Activated B cell treated with CpG ODN at 0.5 μM for 24 hours (primary cell): ENCODE measurements at regions of chr12 and their contacts with region 1.

Region 1: GRCh38 chr12:113174461-113175384 is 10.6 kb downstream of the DDX54 start:
- DNase-seq: peak; percentile 78
- ATAC-seq: peak; percentile 81
- H3K4me3 Mint-ChIP-seq: no peak overlapping the region
- H3K27ac Mint-ChIP-seq: no peak overlapping the region
- H3K4me1 Mint-ChIP-seq: peaks cover 32% of the 10 kb centered on the region
- H3K27me3 Mint-ChIP-seq: no peaks in the 10 kb centered on the region
- CTCF ChIP-seq: peak; percentile 95

Region 2: GRCh38 chr12:112750971-112751370 is 423.8 kb before region 1 on chr12:
- CTCF ChIA-PET with region 1: no interaction called
- POLR2A ChIA-PET with region 1: no interaction called
- intact Hi-C with region 1: no loop called
- DNase-seq: no peak
- ATAC-seq: no peak
- H3K4me3 Mint-ChIP-seq: no peak overlapping the region
- H3K27ac Mint-ChIP-seq: no peak overlapping the region
- H3K4me1 Mint-ChIP-seq: no peaks in the 10 kb centered on the region
- H3K27me3 Mint-ChIP-seq: peaks cover 15% of the 10 kb centered on the region
- CTCF ChIP-seq: no peak

Region 3: GRCh38 chr12:112900299-112901145 is 274.2 kb before region 1 on chr12:
- CTCF ChIA-PET with region 1: interaction called, 7 read pairs
- POLR2A ChIA-PET with region 1: interaction called, 4 read pairs
- intact Hi-C with region 1: loop called (anchors 2 kb)
- DNase-seq: no peak
- ATAC-seq: peak; percentile 45
- H3K4me3 Mint-ChIP-seq: no peak overlapping the region
- H3K27ac Mint-ChIP-seq: no peak overlapping the region
- H3K4me1 Mint-ChIP-seq: peaks cover 42% of the 10 kb centered on the region
- H3K27me3 Mint-ChIP-seq: peaks cover 2% of the 10 kb centered on the region
- CTCF ChIP-seq: peak; percentile 73

Region 4: DNA sequence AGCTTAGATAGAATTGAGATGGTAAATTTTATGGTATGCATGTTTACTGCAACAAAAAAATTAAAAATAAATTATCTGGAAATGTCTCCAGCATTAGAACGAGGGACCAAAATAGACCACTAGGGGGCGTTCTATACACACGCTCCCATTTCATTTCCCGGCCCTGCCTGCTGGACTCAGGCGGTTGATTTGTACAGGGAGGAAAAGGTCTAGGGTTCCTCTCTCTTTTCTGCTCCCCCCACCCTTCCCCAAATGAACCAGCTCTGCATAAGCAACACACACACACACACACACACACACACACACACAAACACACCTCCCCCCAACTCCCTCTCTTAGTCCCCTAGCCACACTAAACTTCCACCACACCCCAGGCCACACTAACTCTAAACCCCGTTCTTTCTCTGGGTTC is 126.0 kb before region 1 on chr12:
- CTCF ChIA-PET with region 1: interaction called, 26 read pairs
- POLR2A ChIA-PET with region 1: interaction called, 8 read pairs
- intact Hi-C with region 1: loop called (anchors 1 kb)
- DNase-seq: no peak
- ATAC-seq: peak; percentile 43
- H3K4me3 Mint-ChIP-seq: no peak overlapping the region
- H3K27ac Mint-ChIP-seq: peak overlapping the region; percentile 75
- H3K4me1 Mint-ChIP-seq: peaks cover 50% of the 10 kb centered on the region
- H3K27me3 Mint-ChIP-seq: no peaks in the 10 kb centered on the region
- CTCF ChIP-seq: no peak

Region 5: DNA sequence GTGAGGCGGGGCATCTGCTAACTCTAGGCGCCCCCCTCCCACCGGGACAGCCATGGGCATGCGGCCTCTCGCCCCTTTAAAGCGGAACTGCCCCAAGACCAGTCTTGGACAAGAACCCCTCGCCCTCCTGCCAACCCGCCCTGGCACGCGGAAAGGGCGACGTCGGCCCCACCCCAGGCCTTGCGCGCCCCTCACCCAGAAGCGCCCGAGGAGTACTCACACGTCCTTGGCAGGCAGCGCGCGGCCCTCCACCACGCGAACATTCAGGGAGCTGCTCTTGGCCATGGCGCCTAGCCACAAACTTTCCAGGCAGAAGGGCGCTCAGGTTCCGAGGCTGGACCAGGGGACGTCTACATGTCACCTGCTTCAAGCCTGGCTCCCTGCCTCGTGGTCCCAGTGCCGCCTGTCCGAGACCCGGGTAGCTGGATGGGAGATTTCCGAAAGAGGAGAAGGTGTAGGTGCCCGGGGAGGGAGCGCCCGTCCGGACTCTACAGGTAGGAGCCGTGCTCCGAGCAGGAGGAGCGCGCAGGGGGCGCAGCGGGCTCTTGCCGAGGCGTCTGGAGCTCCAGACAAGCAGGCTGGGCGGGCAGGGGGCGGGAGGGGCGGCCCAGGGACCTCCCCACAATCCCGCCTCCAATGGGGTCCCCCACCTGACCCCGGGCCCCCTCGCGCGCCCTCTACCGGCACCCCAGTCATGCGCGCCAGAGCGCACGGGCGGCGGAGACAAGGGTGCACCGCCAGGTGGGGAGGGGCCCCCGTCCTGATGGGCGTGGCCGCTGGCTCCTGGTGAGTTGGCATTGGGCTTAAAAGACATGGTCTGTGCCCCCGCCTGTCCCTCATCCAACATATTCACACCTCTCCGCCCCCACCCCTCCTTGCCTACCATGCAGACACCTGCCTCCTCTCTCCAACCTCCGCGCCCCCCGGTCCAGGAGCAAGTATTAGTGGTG is 39.3 kb before region 1 on chr12 and contains the start of gene RASAL1:
- CTCF ChIA-PET with region 1: interaction called, 3 read pairs
- POLR2A ChIA-PET with region 1: interaction called, 5 read pairs
- intact Hi-C with region 1: loop called (anchors 1 kb)
- DNase-seq: peak; percentile 64
- ATAC-seq: peak; percentile 84
- H3K4me3 Mint-ChIP-seq: peak within 1 kb of the TSS; percentile 77
- H3K27ac Mint-ChIP-seq: peak within 1 kb of the TSS; percentile 80
- H3K4me1 Mint-ChIP-seq: peaks cover 30% of the 10 kb centered on the region
- H3K27me3 Mint-ChIP-seq: peaks cover 11% of the 10 kb centered on the region
- CTCF ChIP-seq: no peak
- total RNA-seq, gene RASAL1: 4.9 and 7.1 TPM in 2 replicates

Region 6: DNA sequence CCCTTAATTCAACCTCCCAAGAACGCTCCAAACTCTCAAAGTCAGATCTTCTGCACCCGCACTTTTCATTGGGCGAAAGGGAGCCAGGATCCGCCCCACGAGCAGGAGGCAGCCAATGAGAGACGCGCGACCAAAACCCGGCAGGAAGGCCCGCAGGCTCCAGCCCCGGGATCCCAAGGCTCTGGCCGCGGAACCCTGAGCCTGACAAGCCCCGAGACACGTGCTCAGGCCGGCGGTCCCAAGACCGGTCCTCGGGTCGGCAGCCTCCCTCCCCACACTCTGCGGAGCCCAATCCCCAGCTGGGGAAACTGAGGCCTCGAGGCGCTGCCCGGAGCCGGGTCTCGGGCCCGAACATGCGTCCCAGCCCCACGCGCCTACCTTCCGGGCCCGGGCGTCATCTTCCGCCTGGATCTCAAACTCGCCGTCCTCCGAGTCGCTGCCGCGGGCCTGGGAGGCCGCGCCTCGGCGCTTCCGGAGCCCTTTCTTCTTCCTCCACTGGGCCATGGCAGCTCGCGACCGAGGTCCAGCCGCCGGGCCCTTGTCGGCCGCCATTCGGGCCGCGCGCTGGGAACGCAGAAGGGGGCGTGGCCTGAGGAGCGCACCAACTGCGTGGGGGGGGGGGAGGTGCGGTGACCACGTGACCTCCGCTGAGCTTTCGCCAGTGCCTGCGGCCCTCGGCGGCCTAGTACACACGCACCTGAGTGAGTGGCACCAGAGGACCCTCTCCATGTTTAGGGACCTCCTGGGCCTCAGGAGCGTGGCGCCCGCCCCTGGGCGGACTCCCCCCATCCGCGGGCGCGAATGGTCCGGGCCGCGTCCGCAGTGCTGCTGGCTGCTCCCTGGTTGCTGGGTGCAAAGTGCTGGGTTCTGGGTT is 10.4 kb after region 1 on chr12 and contains the starts of genes DDX54 and RITA1:
- CTCF ChIA-PET with region 1: interaction called, 8 read pairs
- POLR2A ChIA-PET with region 1: interaction called, 15 read pairs
- intact Hi-C with region 1: no loop called
- DNase-seq: peak; percentile 87
- ATAC-seq: peak; percentile 83
- H3K4me3 Mint-ChIP-seq: peak within 1 kb of the TSS; percentile 93
- H3K27ac Mint-ChIP-seq: peak within 1 kb of the TSS; percentile 94
- H3K4me1 Mint-ChIP-seq: peaks cover 39% of the 10 kb centered on the region
- H3K27me3 Mint-ChIP-seq: no peaks in the 10 kb centered on the region
- CTCF ChIP-seq: no peak
- total RNA-seq, gene DDX54: 115 TPM in 2 replicates
- total RNA-seq, gene RITA1: 15.5 and 18.2 TPM in 2 replicates

Region 7: DNA sequence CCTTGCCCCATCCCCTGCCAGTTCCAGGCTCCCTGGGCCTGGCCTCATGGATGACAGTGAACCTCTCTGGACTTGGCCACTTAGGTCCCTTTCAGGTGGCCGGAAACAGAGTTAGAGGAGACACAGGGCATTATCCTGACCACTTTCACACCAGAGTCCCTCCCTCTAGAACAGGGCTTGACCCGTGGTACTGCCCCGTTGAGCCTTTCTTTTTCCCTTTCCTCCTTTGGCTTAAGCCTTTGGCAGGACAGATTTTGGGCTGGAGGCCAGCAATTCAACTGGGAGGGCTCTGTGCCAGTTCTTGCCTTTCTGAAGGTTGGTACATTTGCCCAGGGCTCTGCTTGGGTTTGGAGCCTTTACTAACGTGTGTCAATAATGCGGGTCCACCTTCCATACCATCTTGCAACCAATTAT is 69.3 kb after region 1 on chr12:
- CTCF ChIA-PET with region 1: no interaction called
- POLR2A ChIA-PET with region 1: no interaction called
- intact Hi-C with region 1: no loop called
- DNase-seq: no peak
- ATAC-seq: no peak
- H3K4me3 Mint-ChIP-seq: no peak overlapping the region
- H3K27ac Mint-ChIP-seq: no peak overlapping the region
- H3K4me1 Mint-ChIP-seq: peaks cover 32% of the 10 kb centered on the region
- H3K27me3 Mint-ChIP-seq: no peaks in the 10 kb centered on the region
- CTCF ChIP-seq: no peak

Region 8: GRCh38 chr12:113439606-113440030 is 264.9 kb after region 1 on chr12:
- CTCF ChIA-PET with region 1: no interaction called
- POLR2A ChIA-PET with region 1: no interaction called
- intact Hi-C with region 1: no loop called
- DNase-seq: no peak
- ATAC-seq: no peak
- H3K4me3 Mint-ChIP-seq: no peak overlapping the region
- H3K27ac Mint-ChIP-seq: no peak overlapping the region
- H3K4me1 Mint-ChIP-seq: no peaks in the 10 kb centered on the region
- H3K27me3 Mint-ChIP-seq: peaks cover 15% of the 10 kb centered on the region
- CTCF ChIP-seq: no peak